Heart left ventricle (tissue), 16 donors: ENCODE measurements at regions of chr1 and their contacts with region 1.

Region 1: DNA sequence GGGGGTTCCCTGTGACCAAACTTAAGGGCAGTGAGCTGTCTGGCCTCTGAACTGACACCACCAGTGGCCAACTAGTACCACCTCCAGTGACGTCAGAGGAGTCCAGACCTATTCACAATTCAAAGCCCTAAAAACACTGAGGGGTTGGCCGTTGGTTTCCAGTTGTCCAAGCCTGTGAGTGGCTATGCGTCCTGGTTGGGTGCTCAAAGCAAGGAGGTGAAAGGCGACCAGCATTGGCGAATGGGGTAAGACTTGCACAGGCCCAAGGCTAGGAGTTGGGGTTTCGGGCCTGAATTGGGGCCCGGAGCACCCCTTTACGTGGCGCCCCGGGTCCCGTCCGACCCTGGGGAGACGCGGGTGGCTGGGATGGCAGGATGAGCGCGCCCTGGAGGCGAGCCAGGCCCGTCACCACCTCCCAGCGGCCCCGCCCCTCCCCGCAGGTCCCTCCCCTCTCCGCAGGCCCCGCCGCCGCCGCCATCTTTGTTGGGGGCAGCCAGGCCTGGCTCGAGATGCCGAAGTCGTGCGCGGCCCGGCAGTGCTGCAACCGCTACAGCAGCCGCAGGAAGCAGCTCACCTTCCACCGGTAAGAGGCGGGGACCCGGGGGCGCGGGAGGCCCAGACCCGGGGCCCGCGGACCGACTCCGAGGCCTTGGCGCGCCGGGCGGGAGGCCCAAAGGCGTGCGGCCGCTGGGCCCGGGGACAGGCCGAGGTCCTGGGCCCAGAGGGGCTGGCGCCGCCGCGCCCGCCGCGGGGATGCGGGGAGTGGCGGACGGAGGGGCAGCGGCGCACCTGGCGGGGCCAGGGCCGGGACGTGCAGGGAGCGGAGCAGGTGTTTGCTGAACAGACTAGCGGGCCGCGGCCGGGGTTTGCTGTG is at the start of gene THAP3:
- DNase-seq: peak; percentile 90 to 95 (median 92)
- ATAC-seq: peak; percentile 70 to 95 (median 95)
- H3K4me3 ChIP-seq: peak within 1 kb of the TSS; percentile 60 to 98 (median 82)
- H3K27ac ChIP-seq: peak within 1 kb of the TSS; percentile 69 to 90 (median 84)
- H3K4me1 ChIP-seq: peaks cover 3 to 28% (median 18%) of the 10 kb centered on the region in 12 donors
- H3K27me3 ChIP-seq: no peaks in the 10 kb centered on the region
- CTCF ChIP-seq: peak in 4 of 12 donors; percentile 13 to 37 (median 16)
- POLR2A ChIP-seq: peak in 1 of 2 donors; percentile 40
- total RNA-seq, gene THAP3: 7.5 to 20.7 (median 12.1) TPM

Region 2: GRCh38 chr1:6041432-6042062 is 583.4 kb before region 1 on chr1:
- intact Hi-C with region 1: no loop called
- DNase-seq: no peak
- ATAC-seq: peak in 2 of 4 donors; percentile 44 to 50
- H3K4me3 ChIP-seq: no peak overlapping the region
- H3K27ac ChIP-seq: no peak overlapping the region
- H3K4me1 ChIP-seq: peaks cover 0 to 6% (median 0%) of the 10 kb centered on the region in 12 donors
- H3K27me3 ChIP-seq: no peaks in the 10 kb centered on the region
- CTCF ChIP-seq: peak in 10 of 12 donors; percentile 27 to 54 (median 49)
- POLR2A ChIP-seq: no peak

Region 3: GRCh38 chr1:6579374-6580118 is 45.4 kb before region 1 on chr1 and contains the start of gene ZBTB48:
- intact Hi-C with region 1: loop called in 1 of 10 experiments (anchors 2 kb)
- DNase-seq: peak; percentile 99 to 100 (median 100)
- ATAC-seq: peak; percentile 95 to 98 (median 98)
- H3K4me3 ChIP-seq: peak within 1 kb of the TSS; percentile 65 to 97 (median 83)
- H3K27ac ChIP-seq: peak within 1 kb of the TSS; percentile 79 to 97 (median 91)
- H3K4me1 ChIP-seq: peaks cover 6 to 52% (median 35%) of the 10 kb centered on the region in 12 donors
- H3K27me3 ChIP-seq: no peaks in the 10 kb centered on the region
- CTCF ChIP-seq: no peak
- POLR2A ChIP-seq: peak; percentile 92 to 95
- total RNA-seq, gene ZBTB48: 6.4 to 23.1 (median 11.8) TPM

Region 4: DNA sequence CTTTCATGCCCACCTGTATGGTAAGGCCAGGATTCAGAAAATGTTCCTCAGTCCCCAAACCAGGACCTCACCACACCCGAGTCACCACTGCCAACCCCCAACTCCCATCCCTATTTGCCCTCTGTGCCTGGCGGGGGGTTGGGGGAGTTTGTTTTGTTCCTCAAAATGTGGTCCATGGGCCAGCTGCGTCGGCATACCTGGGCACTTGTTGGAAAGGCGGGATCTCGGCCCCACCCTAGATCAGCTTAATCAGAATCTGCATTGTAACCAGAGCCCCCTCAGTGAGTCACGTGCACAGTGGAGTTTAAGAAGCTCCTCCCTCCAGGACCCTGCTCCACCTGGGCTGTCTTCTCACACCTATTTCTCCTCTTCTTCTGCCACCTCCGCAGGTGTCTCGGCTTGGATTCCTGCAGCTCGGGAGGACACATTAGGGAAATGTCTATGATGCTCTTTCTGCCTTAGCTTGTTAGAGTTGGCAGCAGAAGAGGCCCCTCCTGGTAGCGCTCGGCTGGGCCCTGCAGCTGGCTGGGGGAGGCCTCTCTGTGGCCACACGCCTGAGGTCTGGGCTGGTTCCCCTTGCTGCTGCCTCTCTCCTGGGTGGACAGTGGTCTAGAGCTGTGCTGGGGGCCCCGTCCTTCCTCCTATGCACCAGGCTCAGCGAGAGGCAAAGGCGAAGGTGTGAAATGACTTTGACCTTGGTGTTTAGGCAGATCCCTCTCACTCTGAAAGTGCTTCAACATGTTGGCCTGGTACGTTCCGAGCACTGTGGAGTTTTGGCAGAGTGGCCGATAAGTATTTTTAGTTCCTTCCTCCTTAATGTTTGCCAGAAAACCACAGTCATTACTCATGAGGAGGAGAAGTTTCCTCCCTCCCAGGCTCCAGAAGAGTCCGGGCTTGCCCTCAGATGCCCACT is 118.5 kb after region 1 on chr1:
- intact Hi-C with region 1: no loop called
- DNase-seq: peak; percentile 57 to 72 (median 63)
- ATAC-seq: peak; percentile 92 to 96 (median 95)
- H3K4me3 ChIP-seq: peak overlapping the region in 5 of 12 donors; percentile 3 to 28 (median 22)
- H3K27ac ChIP-seq: peak overlapping the region; percentile 78 to 89 (median 85)
- H3K4me1 ChIP-seq: peaks cover 0 to 22% (median 15%) of the 10 kb centered on the region in 12 donors
- H3K27me3 ChIP-seq: no peaks in the 10 kb centered on the region
- CTCF ChIP-seq: no peak
- POLR2A ChIP-seq: no peak

Region 5: DNA sequence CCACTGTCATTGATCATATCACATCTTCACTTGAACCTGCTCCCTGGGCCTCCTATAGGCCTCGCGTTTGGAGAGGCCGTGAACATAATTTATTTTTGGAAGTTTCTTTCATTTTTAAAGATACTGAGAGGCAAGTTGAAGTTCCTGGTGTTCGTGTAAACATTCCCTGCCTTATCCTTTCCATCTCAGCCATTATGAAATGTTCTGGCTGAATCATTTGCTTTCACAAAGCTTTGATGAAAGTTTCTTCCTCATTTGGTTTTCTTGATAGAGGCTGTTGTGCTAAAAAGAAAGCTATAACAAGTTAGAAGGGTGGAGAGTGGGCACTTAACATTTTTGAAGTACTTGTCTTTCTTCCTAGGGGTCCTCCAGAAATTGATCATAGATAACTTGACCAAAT is 175.8 kb after region 1 on chr1:
- intact Hi-C with region 1: no loop called
- DNase-seq: no peak
- ATAC-seq: no peak
- H3K4me3 ChIP-seq: no peak overlapping the region
- H3K27ac ChIP-seq: peak overlapping the region in 11 of 12 donors; percentile 19 to 71 (median 53)
- H3K4me1 ChIP-seq: peaks cover 6 to 73% (median 53%) of the 10 kb centered on the region in 12 donors
- H3K27me3 ChIP-seq: no peaks in the 10 kb centered on the region
- CTCF ChIP-seq: no peak
- POLR2A ChIP-seq: no peak

Region 6: GRCh38 chr1:7424352-7424890 is 799.5 kb after region 1 on chr1:
- intact Hi-C with region 1: no loop called
- DNase-seq: peak in 2 of 5 donors; percentile 17 to 24
- ATAC-seq: no peak
- H3K4me3 ChIP-seq: no peak overlapping the region
- H3K27ac ChIP-seq: no peak overlapping the region
- H3K4me1 ChIP-seq: peaks cover 0 to 7% (median 0%) of the 10 kb centered on the region in 12 donors
- H3K27me3 ChIP-seq: no peaks in the 10 kb centered on the region
- CTCF ChIP-seq: no peak
- POLR2A ChIP-seq: no peak